AG04449 (cell line): ENCODE measurements at regions of chrX and their contacts with region 1.

Region 1: GRCh38 chrX:108699368-108699767 is 37.0 kb downstream of the IRS4 start:
- DNase-seq: no peak
- H3K4me3 ChIP-seq: no peak overlapping the region
- CTCF ChIP-seq: peak; percentile 22

Region 2: DNA sequence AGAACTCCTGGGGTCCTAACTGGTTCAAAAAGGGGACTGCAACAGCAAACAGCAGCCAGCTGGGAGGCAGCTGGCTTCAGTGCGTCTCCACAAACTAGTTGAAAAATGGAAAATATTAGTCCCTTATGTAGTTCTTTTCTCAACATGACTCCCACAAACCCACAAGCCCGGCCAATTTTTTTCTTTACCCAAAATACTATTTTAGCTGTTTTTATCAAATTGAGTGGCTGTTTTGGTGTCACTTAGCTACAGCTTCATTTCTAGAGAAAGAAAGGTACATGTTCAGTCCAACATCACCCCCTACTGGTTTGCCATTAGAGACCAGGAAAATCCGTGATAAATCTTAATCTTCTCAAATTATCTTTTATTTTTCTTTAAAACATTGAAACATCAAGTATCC is 685.3 kb after region 1 on chrX:
- CTCF ChIA-PET with region 1: interaction called, 88 read pairs
- POLR2A ChIA-PET with region 1: no interaction called
- DNase-seq: no peak
- H3K4me3 ChIP-seq: no peak overlapping the region
- CTCF ChIP-seq: peak; percentile 9

Region 3: GRCh38 chrX:109475174-109475891 is 776.0 kb after region 1 on chrX:
- CTCF ChIA-PET with region 1: interaction called, 75 read pairs
- POLR2A ChIA-PET with region 1: no interaction called
- DNase-seq: no peak
- H3K4me3 ChIP-seq: no peak overlapping the region
- CTCF ChIP-seq: peak; percentile 47